Breast epithelium (tissue), 4 donors: ENCODE measurements at regions of chr17 and their contacts with region 1.

Region 1: GRCh38 chr17:59725691-59726090 is 18.2 kb downstream of the VMP1 start:
- DNase-seq: no peak
- H3K4me3 ChIP-seq: no peak overlapping the region
- H3K27ac ChIP-seq: peak overlapping the region; percentile 55 to 81
- H3K4me1 ChIP-seq: peaks cover 0 to 2% of the 10 kb centered on the region in 2 donors
- H3K27me3 ChIP-seq: no peaks in the 10 kb centered on the region
- CTCF ChIP-seq: no peak
- POLR2A ChIP-seq: no peak

Region 2: DNA sequence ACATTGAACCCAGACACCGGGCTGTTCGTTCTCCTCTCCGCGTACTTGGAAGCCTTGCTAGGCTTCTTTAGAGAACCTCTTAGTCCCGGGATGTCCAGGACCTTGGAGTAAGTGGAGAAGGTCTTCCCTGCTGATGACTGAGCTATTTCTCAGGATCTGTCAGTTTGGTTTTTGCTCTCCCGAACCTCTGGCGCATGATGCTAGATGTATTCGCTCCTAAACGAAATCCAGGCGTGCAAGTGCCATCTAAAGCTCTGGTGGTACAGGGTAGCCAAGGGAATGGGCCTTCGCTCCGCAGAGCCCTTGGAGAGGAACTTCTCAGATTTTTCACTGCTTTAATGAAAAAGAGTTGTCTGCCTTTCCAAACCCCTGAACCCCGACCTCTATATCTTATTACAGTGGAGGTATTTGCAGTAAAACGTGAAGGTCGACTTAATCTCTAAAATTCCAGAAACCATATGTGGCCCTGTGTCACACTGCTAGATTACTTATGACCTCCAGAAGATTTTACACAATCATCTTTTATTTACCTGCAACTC is 17.7 kb before region 1 on chr17:
- intact Hi-C with region 1: loop called (anchors 2 kb)
- DNase-seq: no peak
- H3K4me3 ChIP-seq: peak overlapping the region; percentile 73 to 81 (median 74)
- H3K27ac ChIP-seq: peak overlapping the region; percentile 94 to 96
- H3K4me1 ChIP-seq: peaks cover 0 to 19% of the 10 kb centered on the region in 2 donors
- H3K27me3 ChIP-seq: no peaks in the 10 kb centered on the region
- CTCF ChIP-seq: no peak
- POLR2A ChIP-seq: no peak

Region 3: DNA sequence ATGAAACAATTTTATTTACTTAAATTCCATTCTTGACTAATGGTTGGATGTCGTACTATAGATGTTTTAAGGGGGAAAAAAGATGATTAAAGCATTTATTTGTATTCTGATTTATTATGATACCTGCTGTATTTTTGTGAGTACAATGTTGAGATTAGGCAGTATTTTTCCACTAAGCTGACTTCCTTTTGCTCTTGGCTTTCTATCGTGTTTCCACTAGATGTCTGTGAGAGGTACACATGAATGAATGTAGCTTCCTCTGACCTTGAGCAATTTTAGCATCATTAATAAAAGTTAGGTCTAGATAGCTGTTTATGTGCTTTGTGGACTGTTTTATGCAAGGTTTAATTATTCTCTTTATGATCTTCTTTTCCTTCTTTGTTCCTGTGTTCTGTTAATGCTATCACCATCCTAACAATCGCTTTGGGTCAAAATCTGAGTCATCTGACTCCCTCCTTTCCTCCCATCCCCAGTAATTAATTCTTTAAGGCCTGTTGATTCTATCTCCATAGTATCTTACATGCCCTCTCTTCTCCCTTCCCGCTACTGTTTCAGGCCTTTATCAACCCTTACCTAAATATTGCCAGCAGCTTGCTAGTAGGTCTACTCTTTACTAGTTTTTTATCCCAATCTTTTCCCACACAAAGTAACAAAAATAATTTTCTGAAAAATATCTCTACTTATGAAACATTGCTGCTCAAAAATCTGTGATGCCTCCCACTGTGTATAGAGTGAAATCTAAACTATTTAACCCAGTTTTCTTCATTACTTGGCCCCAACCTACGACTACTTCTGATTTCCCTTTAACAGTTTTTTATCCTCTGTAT is 57.7 kb after region 1 on chr17:
- intact Hi-C with region 1: no loop called
- DNase-seq: no peak
- H3K4me3 ChIP-seq: peak overlapping the region in 1 of 3 donors; percentile 1
- H3K27ac ChIP-seq: peak overlapping the region; percentile 72 to 90
- H3K4me1 ChIP-seq: peaks cover 3 to 19% of the 10 kb centered on the region in 2 donors
- H3K27me3 ChIP-seq: no peaks in the 10 kb centered on the region
- CTCF ChIP-seq: no peak
- POLR2A ChIP-seq: no peak